B cell (primary cell): ENCODE measurements at regions of chr14 and their contacts with region 1.

Region 1: DNA sequence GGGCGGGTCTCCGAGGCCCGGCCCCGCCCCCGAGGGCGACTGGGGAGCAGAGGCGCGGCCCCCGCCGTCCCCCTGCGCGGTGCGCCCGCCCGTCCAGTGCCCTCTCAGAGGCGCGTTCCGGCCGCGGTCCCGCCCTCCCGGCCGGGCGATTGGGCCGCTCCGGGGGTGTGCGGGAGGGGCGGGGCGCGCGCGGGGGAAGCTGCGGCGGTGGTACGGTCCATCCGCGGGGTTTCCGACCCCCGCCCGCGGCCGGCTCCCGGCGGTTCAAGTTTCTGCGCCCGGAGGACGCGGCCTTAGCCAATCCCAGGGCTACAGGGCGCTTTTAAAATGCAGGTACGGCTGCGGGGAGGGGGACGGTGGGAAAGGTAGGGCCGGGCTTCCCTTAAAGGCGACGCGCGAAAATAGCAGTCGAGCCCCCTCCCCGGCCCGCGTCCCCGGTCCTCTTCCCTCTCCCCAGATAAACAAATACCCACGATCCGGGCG is 317 bp upstream of the CCDC85C start:
- DNase-seq: peak; percentile 93
- ATAC-seq: peak; percentile 93
- H3K4me3 ChIP-seq: peak overlapping the region; percentile 6 to 88 (median 77)
- H3K4me3 Mint-ChIP-seq: peak overlapping the region; percentile 91
- H3K27ac ChIP-seq: peak overlapping the region; percentile 51 to 60
- H3K27ac Mint-ChIP-seq: peak overlapping the region; percentile 88
- H3K4me1 ChIP-seq: peaks cover 5 to 16% of the 10 kb centered on the region in 2 donors
- H3K4me1 Mint-ChIP-seq: peaks cover 14% of the 10 kb centered on the region
- H3K27me3 ChIP-seq: peaks cover 0 to 12% (median 5%) of the 10 kb centered on the region in 4 experiments
- H3K27me3 Mint-ChIP-seq: peaks cover 7% of the 10 kb centered on the region
- CTCF ChIP-seq: no peak

Region 2: GRCh38 chr14:99619835-99620834 is 15.8 kb after region 1 on chr14:
- CTCF ChIA-PET with region 1: no interaction called
- POLR2A ChIA-PET with region 1: no interaction called
- intact Hi-C with region 1: no loop called
- DNase-seq: no peak
- ATAC-seq: no peak
- H3K4me3 ChIP-seq: no peak overlapping the region
- H3K4me3 Mint-ChIP-seq: no peak overlapping the region
- H3K27ac ChIP-seq: no peak overlapping the region
- H3K27ac Mint-ChIP-seq: no peak overlapping the region
- H3K4me1 ChIP-seq: no peaks in the 10 kb centered on the region
- H3K4me1 Mint-ChIP-seq: no peaks in the 10 kb centered on the region
- H3K27me3 ChIP-seq: peaks cover 0 to 40% (median 3%) of the 10 kb centered on the region in 4 experiments
- H3K27me3 Mint-ChIP-seq: peaks cover 47% of the 10 kb centered on the region
- CTCF ChIP-seq: no peak

Region 3: DNA sequence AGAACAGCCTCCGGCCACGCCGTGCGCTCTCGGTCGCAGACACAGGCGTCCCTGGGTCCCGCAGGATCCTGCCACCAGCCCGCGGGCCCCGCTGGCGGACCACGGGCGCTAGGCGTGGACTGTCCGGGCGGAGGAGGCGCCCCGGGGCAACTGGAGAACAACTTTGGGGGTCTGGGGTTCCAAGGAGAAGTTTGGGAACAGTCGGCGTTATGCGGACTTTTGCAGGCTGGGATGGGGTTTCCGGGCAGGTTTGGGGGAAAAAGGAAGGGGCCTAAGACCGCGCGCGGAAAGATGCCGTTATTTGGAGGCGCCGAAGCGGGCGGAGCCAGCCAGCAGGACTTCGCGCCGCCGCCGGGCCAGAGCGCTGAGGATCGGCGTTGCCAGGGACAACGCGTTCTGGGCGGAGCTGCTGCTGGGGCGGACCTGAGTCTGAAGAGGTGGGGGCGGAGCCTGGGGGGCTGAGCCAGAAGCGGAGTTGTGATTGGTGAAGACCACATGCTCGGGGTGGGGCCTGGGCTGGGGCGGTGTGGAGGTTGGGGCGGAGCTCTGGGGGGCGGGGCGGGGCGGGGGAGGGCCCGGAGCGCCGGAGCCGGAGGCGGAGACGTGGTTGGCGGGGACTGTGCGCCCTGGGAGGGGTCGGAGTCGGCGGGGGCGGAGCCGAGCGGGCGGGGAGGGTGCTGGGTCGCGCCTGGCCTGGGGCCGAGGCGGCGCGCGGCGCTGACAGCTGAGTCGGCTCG is 79.5 kb after region 1 on chr14 and contains the start of gene CYP46A1:
- CTCF ChIA-PET with region 1: no interaction called
- POLR2A ChIA-PET with region 1: interaction called, 3 read pairs
- intact Hi-C with region 1: loop called (anchors 1 kb)
- DNase-seq: peak; percentile 99
- ATAC-seq: peak; percentile 95
- H3K4me3 ChIP-seq: peak within 1 kb of the TSS; percentile 41 to 99 (median 84)
- H3K4me3 Mint-ChIP-seq: peak within 1 kb of the TSS; percentile 95
- H3K27ac ChIP-seq: peak within 1 kb of the TSS; percentile 41 to 87
- H3K27ac Mint-ChIP-seq: peak within 1 kb of the TSS; percentile 93
- H3K4me1 ChIP-seq: peaks cover 17 to 24% of the 10 kb centered on the region in 2 donors
- H3K4me1 Mint-ChIP-seq: peaks cover 13% of the 10 kb centered on the region
- H3K27me3 ChIP-seq: peaks cover 0 to 38% (median 8%) of the 10 kb centered on the region in 4 experiments
- H3K27me3 Mint-ChIP-seq: peaks cover 34% of the 10 kb centered on the region
- CTCF ChIP-seq: no peak
- total RNA-seq, gene CYP46A1: 0.10 and 0.27 TPM in 2 replicates

Region 4: DNA sequence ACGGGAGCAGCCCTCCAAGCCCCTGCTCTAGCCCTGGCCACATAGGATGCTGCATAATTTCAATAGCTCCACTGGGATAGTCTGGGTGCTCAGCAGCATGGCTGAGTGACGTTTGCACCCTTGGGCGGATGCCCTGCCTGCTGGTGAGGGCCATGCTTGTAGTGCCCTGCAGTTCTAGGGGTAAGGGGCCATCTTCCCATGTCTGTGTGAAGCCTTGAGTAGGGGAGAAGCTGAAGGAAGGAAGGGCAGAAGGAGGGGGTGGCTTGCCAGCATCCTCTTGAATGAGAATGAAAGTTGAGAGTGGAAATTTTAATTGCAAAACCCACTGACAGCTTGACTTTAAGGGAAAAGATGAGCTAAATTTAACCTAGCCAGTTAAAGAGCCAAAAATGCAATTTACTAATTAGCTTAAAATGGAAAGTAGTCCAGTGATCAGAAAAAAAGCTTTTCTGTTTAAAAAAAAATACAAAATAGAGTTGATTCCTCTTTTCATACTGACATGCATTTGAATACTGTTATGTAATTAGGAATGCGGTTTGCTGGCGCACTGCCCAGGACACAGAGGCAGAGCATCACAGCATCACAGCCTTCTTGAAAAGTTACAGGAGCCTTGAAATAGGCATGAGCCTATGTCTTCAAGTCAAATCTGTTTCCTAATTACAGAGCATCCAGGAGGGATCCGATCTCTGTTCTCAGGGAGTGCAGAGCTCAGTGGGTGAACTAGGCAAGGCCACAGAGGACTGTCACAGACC is 170.4 kb after region 1 on chr14:
- CTCF ChIA-PET with region 1: no interaction called
- POLR2A ChIA-PET with region 1: no interaction called
- intact Hi-C with region 1: no loop called
- DNase-seq: no peak
- ATAC-seq: no peak
- H3K4me3 ChIP-seq: no peak overlapping the region
- H3K4me3 Mint-ChIP-seq: no peak overlapping the region
- H3K27ac ChIP-seq: no peak overlapping the region
- H3K27ac Mint-ChIP-seq: no peak overlapping the region
- H3K4me1 ChIP-seq: no peaks in the 10 kb centered on the region
- H3K4me1 Mint-ChIP-seq: no peaks in the 10 kb centered on the region
- H3K27me3 ChIP-seq: no peaks in the 10 kb centered on the region
- H3K27me3 Mint-ChIP-seq: peaks cover 46% of the 10 kb centered on the region
- CTCF ChIP-seq: no peak

Region 5: GRCh38 chr14:100213956-100214774 is 609.8 kb after region 1 on chr14:
- CTCF ChIA-PET with region 1: no interaction called
- POLR2A ChIA-PET with region 1: no interaction called
- intact Hi-C with region 1: loop called (anchors 10 kb)
- DNase-seq: peak; percentile 92
- ATAC-seq: peak; percentile 96
- H3K4me3 ChIP-seq: peak overlapping the region; percentile 17 to 91 (median 90)
- H3K4me3 Mint-ChIP-seq: peak overlapping the region; percentile 87
- H3K27ac ChIP-seq: peak overlapping the region; percentile 77 to 78
- H3K27ac Mint-ChIP-seq: peak overlapping the region; percentile 89
- H3K4me1 ChIP-seq: peaks cover 12 to 15% of the 10 kb centered on the region in 2 donors
- H3K4me1 Mint-ChIP-seq: peaks cover 16% of the 10 kb centered on the region
- H3K27me3 ChIP-seq: no peaks in the 10 kb centered on the region
- H3K27me3 Mint-ChIP-seq: no peaks in the 10 kb centered on the region
- CTCF ChIP-seq: no peak

Region 6: DNA sequence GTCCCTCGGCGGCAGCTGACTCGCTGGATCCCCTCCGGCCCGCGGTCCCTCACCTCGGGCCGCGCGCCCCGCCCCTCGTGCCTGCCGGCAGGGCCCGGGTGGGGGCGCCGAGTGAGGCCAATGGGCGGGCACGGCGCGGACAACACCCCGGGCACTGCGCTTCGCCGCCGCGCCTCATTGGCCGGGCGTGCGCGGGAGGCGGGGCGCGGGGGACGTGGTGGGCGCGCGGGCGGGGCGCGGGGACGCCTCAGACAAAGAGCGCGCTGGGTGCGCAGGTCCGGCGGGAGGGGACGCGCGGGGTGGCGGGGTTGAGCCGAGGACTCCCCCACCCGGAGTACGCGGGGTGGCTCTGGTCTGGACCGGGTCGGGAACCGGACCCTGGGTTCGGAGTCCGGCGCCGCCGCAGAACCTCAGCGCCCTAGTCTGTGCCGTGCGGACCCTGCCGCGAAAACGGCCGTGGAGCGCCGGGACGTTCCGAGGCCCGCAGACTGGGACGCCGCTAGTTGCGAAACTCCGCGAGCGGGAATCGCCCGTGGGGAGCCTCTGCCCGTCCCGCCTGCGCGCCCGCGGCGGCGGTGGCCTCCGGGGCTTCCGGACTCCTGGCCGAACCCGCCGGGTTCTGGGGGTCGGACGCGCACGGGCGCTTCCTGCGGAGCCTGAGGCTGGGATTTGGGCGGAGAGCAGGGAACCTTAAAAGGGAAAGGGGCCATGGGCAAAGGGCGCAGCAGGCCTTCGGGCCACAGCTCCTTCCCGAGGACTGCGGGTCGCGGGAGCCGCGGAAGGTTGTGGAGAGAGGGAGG is 702.3 kb after region 1 on chr14 and contains the start of gene SLC25A29:
- CTCF ChIA-PET with region 1: no interaction called
- POLR2A ChIA-PET with region 1: no interaction called
- intact Hi-C with region 1: loop called (anchors 10 kb)
- DNase-seq: peak; percentile 84
- ATAC-seq: peak; percentile 94
- H3K4me3 ChIP-seq: peak within 1 kb of the TSS in 4 of 5 experiments; percentile 70 to 81 (median 80)
- H3K4me3 Mint-ChIP-seq: peak within 1 kb of the TSS; percentile 94
- H3K27ac ChIP-seq: peak within 1 kb of the TSS in 1 of 2 donors; percentile 46
- H3K27ac Mint-ChIP-seq: peak within 1 kb of the TSS; percentile 83
- H3K4me1 ChIP-seq: peaks cover 20 to 32% of the 10 kb centered on the region in 2 donors
- H3K4me1 Mint-ChIP-seq: peaks cover 21% of the 10 kb centered on the region
- H3K27me3 ChIP-seq: peaks cover 0 to 3% (median 0%) of the 10 kb centered on the region in 4 experiments
- H3K27me3 Mint-ChIP-seq: no peaks in the 10 kb centered on the region
- CTCF ChIP-seq: no peak
- total RNA-seq, gene SLC25A29: 99.9 and 108 TPM in 2 replicates